ENCODE measurements at regions of chr12 and their contacts with region 1.

Region 1: DNA sequence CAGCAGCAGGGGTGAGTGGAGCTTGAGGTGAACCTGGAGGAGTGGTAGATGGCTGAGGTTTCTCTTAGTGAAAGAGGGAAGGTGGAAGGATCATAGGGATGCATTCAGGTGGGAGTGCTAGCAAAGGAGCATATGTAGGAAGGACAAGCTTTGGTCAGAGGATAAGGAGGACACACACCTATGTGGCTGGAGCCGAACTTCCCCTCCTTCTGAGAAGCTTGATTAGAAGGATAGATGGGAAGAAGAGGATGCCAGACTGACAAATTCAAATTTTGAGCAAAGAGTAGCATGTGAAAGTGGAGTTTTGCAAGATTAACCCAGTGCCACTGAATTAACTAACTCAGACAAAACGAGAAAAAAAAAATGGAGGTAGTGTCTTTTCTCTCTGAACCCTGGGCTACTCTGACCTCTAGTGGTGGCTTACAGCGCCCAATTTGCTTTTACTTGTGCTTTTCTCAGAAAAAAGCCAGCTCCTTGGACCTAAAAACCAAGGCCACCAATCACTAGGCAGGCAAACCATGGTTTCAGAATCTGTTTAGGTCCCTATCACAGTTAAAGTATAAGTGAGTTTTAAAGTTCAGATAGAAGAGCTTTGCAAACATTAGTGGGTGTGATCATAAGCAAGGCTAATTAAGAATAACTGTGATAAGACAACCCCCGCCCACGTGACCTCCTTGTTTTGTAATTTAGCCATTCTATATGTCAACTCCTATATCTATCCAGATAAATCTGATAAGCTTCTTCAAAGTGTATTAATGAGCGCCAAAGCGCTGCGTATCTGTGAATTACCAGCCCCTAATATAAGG is 15.5 kb downstream of the EMP1 start:
- DNase-seq: peak; percentile 84
- ATAC-seq: peak; percentile 59
- H3K4me3 Mint-ChIP-seq: no peak overlapping the region
- H3K27ac Mint-ChIP-seq: peak overlapping the region; percentile 49
- H3K4me1 Mint-ChIP-seq: peaks cover 29% of the 10 kb centered on the region
- H3K27me3 Mint-ChIP-seq: no peaks in the 10 kb centered on the region

Region 2: GRCh38 chr12:12837025-12837872 is 374.8 kb before region 1 on chr12:
- CTCF ChIA-PET with region 1: interaction called, 3 read pairs
- POLR2A ChIA-PET with region 1: no interaction called
- intact Hi-C with region 1: loop called (anchors 2 to 5 kb)
- DNase-seq: peak; percentile 76
- ATAC-seq: peak; percentile 95
- H3K4me3 Mint-ChIP-seq: no peak overlapping the region
- H3K27ac Mint-ChIP-seq: peak overlapping the region; percentile 77
- H3K4me1 Mint-ChIP-seq: peaks cover 44% of the 10 kb centered on the region
- H3K27me3 Mint-ChIP-seq: no peaks in the 10 kb centered on the region

Region 3: GRCh38 chr12:12983420-12984035 is 228.5 kb before region 1 on chr12:
- CTCF ChIA-PET with region 1: interaction called, 28 read pairs
- POLR2A ChIA-PET with region 1: no interaction called
- intact Hi-C with region 1: loop called in 1 of 2 experiments (anchors 1 kb)
- DNase-seq: peak; percentile 16
- ATAC-seq: no peak
- H3K4me3 Mint-ChIP-seq: no peak overlapping the region
- H3K27ac Mint-ChIP-seq: no peak overlapping the region
- H3K4me1 Mint-ChIP-seq: no peaks in the 10 kb centered on the region
- H3K27me3 Mint-ChIP-seq: no peaks in the 10 kb centered on the region

Region 4: DNA sequence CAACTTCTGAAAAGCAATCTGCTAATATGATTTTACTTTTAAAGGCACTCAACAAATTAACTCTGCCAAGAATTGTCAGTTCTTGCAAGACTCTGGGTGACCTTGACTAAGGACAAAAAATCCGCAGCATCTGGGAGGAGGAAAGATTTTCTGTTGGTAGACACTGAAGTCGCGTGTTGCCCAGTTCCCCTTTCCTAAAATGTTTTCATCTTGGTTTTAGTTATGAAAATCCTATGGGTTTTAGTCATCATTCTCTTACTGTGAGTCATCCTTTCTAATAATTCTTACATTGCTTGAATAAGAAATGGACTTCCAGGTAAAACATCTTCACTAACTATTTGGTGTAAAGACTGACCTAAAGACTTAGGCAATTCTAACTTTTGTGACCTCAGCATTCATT is 117.7 kb before region 1 on chr12:
- CTCF ChIA-PET with region 1: interaction called, 145 read pairs
- POLR2A ChIA-PET with region 1: no interaction called
- intact Hi-C with region 1: loop called (anchors 1 kb)
- DNase-seq: no peak
- ATAC-seq: no peak
- H3K4me3 Mint-ChIP-seq: no peak overlapping the region
- H3K27ac Mint-ChIP-seq: no peak overlapping the region
- H3K4me1 Mint-ChIP-seq: peaks cover 26% of the 10 kb centered on the region
- H3K27me3 Mint-ChIP-seq: no peaks in the 10 kb centered on the region

Region 5: DNA sequence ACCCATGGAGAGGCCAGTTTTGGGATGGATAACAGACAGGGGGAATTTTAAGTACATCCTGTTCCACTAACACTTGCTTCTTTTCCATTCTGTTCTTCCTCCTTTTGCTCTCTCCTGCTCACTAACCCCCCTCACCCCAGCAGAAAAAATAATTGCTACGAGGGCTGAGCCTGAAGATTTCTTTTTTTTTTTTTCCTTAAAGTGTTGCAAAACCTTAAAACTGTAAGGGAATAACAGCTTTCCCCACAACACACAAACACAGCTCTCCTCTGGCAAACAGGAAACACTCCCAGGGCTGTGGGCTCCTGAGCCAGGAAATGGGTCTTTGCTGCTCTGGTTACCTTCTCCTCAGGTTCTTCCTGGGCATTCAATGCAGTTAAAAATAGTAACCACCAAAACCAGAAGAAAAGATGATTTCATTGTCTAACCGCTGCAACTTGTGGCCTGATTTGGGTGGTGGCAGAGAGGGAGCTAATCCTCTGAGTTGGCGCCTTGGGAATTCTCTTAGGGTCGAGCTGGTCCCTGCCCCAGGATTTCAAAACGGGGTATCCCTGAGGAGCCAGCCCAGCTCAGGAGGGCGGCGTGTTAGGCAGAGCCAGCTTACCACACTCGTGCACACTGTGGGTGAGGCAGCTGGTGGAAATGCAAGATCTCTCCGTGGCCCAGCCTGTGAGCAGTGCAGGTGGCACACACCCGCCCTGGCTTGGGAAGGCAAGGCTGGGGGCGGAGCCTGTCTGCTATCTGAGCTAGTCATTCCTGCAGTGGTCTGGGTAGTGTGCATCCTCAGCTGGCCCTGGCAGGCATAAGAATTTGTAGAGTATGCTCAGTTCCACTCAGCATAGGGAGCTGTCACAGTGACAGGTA is 32.6 kb before region 1 on chr12:
- CTCF ChIA-PET with region 1: interaction called, 17 read pairs
- POLR2A ChIA-PET with region 1: no interaction called
- intact Hi-C with region 1: no loop called
- DNase-seq: peak; percentile 83
- ATAC-seq: peak; percentile 96
- H3K4me3 Mint-ChIP-seq: peak overlapping the region; percentile 54
- H3K27ac Mint-ChIP-seq: peak overlapping the region; percentile 74
- H3K4me1 Mint-ChIP-seq: peaks cover 26% of the 10 kb centered on the region
- H3K27me3 Mint-ChIP-seq: peaks cover 9% of the 10 kb centered on the region

Region 6: GRCh38 chr12:13316587-13317246 is 104.7 kb after region 1 on chr12:
- CTCF ChIA-PET with region 1: no interaction called
- POLR2A ChIA-PET with region 1: no interaction called
- intact Hi-C with region 1: no loop called
- DNase-seq: no peak
- ATAC-seq: no peak
- H3K4me3 Mint-ChIP-seq: no peak overlapping the region
- H3K27ac Mint-ChIP-seq: no peak overlapping the region
- H3K4me1 Mint-ChIP-seq: no peaks in the 10 kb centered on the region
- H3K27me3 Mint-ChIP-seq: peaks cover 28% of the 10 kb centered on the region

Measured in activated CD4-positive, alpha-beta T cell treated with anti-CD3 and anti-CD28 coated beads for 36 hours (primary cell).